ENCODE measurements at regions of chr2 and their contacts with region 1.

Region 1: GRCh38 chr2:227655454-227655853 is 11.2 kb upstream of the SCYGR5 start:
- DNase-seq: peak; percentile 19
- ATAC-seq: peak; percentile 52; the same call in 1 of the 2 replicates
- H3K4me3 ChIP-seq: no peak overlapping the region
- H3K27ac ChIP-seq: no peak overlapping the region
- H3K4me1 ChIP-seq: peaks cover 0 to 6% of the 10 kb centered on the region in 2 experiments; a peak in 2 of 4 replicates
- H3K27me3 ChIP-seq: no peaks in the 10 kb centered on the region
- CTCF ChIP-seq: no peak
- POLR2A ChIP-seq: no peak
- RAD21 ChIP-seq: no peak

Region 2: DNA sequence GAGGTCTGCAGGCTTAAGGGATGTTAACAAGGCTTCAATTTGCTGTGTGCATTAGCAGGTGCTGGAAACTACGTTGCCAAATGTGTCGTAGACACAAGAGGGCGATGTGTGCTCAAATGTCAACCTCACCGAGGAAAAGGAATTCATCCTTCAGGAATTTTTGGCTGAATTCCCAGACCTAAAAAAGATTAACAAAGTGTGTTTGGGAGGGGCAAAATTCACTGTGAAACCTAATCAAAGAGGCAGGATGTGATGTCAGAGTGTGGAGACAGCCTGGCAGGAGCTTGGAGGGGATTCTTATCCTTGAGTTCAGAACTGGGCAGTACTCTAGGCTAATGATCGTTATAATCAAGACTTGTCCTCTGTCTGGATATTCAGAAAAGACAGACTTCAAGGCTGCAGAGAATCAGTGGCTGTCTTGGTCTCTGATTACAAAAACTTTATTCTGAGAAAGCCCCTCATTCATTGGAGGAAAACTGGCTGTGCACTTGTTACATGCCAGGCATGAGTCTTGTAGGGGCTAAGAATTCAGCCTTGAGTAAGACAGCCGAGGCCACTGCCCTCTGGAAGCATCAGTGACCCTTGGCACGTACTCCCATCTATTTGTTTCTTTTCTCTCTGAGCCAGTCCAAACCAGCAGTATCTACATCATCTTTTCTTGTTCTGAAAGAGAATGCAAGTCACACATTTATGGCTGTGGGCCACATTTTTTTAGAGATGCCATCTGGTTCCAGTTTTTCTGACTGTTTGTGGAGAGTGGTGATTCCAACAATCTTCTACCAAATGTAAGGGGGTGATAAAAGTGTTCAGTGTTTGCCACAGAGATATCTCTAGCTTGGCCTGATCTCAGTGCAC is 249.1 kb before region 1 on chr2:
- CTCF ChIA-PET with region 1: interaction called, 5 read pairs
- POLR2A ChIA-PET with region 1: no interaction called
- RAD21 ChIA-PET with region 1: no interaction called
- intact Hi-C with region 1: loop called (anchors 1 kb)
- DNase-seq: peak; percentile 94
- ATAC-seq: peak; percentile 92
- H3K4me3 ChIP-seq: 0 out of 4 replicates have a peak overlapping the region, but pooled peaks of 1 of the 2 experiments have one; percentile 4
- H3K27ac ChIP-seq: peak overlapping the region; percentile 11; the same call in 1 of the 2 replicates
- H3K4me1 ChIP-seq: peaks cover 6 to 27% of the 10 kb centered on the region in 2 experiments
- H3K27me3 ChIP-seq: no peaks in the 10 kb centered on the region
- CTCF ChIP-seq: peak; percentile 71 to 92 (median 84)
- POLR2A ChIP-seq: no peak
- RAD21 ChIP-seq: peak; percentile 99

Region 3: DNA sequence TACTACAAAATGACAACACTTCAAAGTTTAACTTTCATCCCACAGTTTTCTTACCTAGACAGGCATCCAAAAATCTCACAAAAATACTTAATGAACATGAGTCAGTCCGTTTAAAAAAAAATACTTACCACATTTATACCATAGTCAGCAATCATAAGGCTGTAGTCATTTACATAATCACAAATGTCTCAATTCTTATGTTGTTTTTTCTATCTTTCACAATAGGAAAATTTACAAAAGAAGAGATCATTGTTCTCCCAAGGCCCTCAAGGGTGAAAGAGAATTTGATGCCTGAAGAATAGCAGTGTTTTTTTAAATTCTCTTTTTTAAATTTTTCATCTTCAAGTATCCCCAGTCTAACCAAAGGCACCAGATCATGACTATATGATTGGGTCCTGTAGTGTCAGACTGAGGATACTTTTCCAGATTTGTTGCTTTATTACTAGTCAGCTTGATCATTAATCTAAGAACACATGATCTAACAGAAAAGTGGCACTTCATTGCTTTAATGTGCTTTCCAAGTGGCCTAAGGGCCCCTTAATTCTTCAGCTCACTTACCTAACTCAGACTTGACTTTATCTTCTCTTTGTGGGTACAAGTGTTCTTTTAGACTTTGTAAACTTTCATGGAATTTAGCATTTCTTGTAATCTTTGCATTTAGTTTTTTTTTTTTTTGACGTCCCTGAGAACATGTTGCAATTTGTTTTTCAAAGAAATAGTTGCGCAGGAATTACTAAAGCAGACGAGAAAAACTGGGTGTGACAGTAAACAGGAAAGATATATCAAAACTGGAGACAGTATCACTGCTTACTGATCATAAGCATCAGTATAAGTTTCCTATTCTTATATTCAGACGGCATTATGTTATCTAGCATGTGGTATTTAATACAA is 16.0 kb after region 1 on chr2:
- CTCF ChIA-PET with region 1: interaction called, 10 read pairs
- POLR2A ChIA-PET with region 1: no interaction called
- RAD21 ChIA-PET with region 1: no interaction called
- intact Hi-C with region 1: no loop called
- DNase-seq: no peak
- ATAC-seq: no peak
- H3K4me3 ChIP-seq: no peak overlapping the region
- H3K27ac ChIP-seq: no peak overlapping the region
- H3K4me1 ChIP-seq: no peaks in the 10 kb centered on the region
- H3K27me3 ChIP-seq: no peaks in the 10 kb centered on the region
- CTCF ChIP-seq: no peak
- POLR2A ChIP-seq: no peak
- RAD21 ChIP-seq: no peak

Region 4: DNA sequence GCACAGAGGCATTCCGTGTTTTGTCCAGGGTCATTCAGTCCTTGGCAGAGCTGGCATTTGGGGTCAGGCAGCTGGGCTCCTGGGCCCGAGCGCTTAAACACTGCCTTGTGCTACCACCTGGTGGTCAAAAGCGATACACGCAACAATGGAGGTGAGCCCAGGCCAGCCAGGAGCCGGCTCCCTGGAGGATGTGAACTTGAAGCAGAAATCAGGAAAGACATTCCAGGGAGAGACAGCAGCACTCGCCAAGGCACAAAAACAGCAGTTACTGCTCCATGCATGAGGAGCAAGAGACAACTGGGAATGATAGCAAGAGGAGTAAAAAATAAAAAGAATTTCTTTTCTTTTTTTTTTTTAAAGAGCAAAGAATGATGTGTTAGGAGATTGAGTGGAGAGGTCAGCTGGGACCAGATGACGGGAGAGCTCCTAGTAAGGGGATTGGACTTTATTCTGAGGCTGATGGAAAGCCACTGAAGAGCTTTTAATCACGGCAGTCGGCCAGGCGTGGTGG is 111.0 kb after region 1 on chr2:
- CTCF ChIA-PET with region 1: interaction called, 72 read pairs
- POLR2A ChIA-PET with region 1: interaction called, 11 read pairs
- RAD21 ChIA-PET with region 1: interaction called, 19 to 22 read pairs
- intact Hi-C with region 1: loop called (anchors 1 kb)
- DNase-seq: peak; percentile 63
- ATAC-seq: peak; percentile 99
- H3K4me3 ChIP-seq: no peak overlapping the region
- H3K27ac ChIP-seq: no peak overlapping the region
- H3K4me1 ChIP-seq: peaks cover 0 to 6% of the 10 kb centered on the region in 2 experiments; a peak in 1 of 4 replicates
- H3K27me3 ChIP-seq: no peaks in the 10 kb centered on the region
- CTCF ChIP-seq: peak; percentile 78 to 93 (median 90); a peak in 5 of 6 replicates
- POLR2A ChIP-seq: no peak
- RAD21 ChIP-seq: peak; percentile 98

Region 5: GRCh38 chr2:227884511-227884947 is 229.1 kb after region 1 on chr2:
- CTCF ChIA-PET with region 1: interaction called, 6 read pairs
- POLR2A ChIA-PET with region 1: no interaction called
- RAD21 ChIA-PET with region 1: no interaction called
- intact Hi-C with region 1: loop called (anchors 5 kb)
- DNase-seq: peak; percentile 73
- ATAC-seq: peak; percentile 98
- H3K4me3 ChIP-seq: no peak overlapping the region
- H3K27ac ChIP-seq: no peak overlapping the region; the same call in 1 of the 2 replicates
- H3K4me1 ChIP-seq: peaks cover 3 to 15% of the 10 kb centered on the region in 2 experiments; a peak in 2 of 4 replicates
- H3K27me3 ChIP-seq: no peaks in the 10 kb centered on the region
- CTCF ChIP-seq: peak; percentile 92 to 97 (median 95)
- POLR2A ChIP-seq: no peak
- RAD21 ChIP-seq: peak; percentile 78